ENCODE measurements at regions of chr15 and their contacts with region 1.

Region 1: DNA sequence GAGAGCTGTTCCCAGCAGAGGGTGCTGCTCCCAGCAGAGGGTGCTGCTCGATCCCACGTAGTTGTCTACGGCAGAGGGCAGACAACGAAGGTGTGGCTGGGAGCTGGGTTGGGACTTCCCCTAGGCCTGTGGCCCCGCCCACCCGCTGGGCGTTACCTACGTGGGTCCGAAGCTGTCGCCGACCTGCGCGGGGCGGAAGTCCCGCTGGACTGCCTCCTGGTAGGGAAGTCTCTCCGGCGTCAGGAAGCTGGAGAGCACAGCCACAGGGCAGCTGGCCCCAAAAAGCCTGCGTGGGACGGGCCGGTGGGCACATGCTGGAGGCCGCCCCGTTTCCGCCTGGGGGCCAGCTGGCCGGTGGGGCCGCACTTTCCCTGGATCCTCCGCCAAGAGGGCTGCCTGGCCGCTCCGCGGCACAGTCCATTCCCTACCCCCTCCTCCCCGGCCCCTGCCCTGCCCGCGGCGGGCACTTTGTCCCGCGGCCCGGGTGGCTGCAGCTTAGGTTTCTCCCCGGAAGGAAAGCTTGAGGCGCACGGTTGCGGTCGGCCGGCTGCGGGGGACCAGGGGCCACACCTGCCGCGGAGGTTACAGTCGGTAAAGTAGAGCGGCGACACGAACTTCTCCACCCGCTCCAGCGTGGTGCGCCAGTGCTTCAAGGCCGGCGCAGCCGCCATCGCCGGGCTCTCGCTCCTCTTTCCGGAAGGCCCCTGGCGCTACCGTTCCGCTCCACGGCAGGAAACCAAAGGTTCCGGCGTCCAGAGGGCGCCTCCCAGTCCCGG is at the start of gene MAN2C1:
- DNase-seq: peak; percentile 80 to 99 (median 93)

Region 2: GRCh38 chr15:75625542-75626347 is 257.6 kb after region 1 on chr15 and contains the start of gene SNUPN:
- intact Hi-C with region 1: loop called (anchors 5 kb)
- DNase-seq: peak; percentile 87 to 99 (median 91)